Activated naive CD4-positive, alpha-beta T cell treated with anti-CD3 and anti-CD28 coated beads for 36 hours (primary cell): ENCODE measurements at regions of chr12 and their contacts with region 1.

Region 1: DNA sequence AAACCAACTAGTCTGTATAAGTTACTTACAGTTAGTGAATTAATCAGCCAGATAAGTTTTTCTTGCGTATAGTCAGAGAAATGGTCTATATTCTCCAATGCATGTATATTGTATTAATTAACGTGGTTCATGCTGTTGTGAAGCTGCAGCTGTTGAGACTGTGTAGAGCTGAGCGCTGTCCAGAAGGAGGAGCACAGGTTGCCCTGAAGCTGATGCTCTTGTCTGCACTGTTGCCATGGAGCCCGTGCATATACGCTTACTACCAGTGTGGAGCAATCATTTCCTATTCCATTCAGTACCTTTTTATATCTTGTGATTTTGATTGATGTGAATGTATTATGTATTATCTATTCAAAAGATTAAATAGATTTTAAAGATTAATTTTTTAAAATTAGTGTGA is 74.3 kb upstream of the ARID2 start:
- DNase-seq: peak; percentile 70
- H3K4me3 Mint-ChIP-seq: no peak overlapping the region
- H3K27ac Mint-ChIP-seq: no peak overlapping the region
- H3K4me1 Mint-ChIP-seq: peaks cover 2% of the 10 kb centered on the region
- H3K27me3 Mint-ChIP-seq: peaks cover 2% of the 10 kb centered on the region

Region 2: GRCh38 chr12:45745861-45746277 is 90.7 kb after region 1 on chr12:
- CTCF ChIA-PET with region 1: interaction called, 3 read pairs
- intact Hi-C with region 1: loop called (anchors 1 kb)
- DNase-seq: no peak
- H3K4me3 Mint-ChIP-seq: no peak overlapping the region
- H3K27ac Mint-ChIP-seq: no peak overlapping the region
- H3K4me1 Mint-ChIP-seq: peaks cover 57% of the 10 kb centered on the region
- H3K27me3 Mint-ChIP-seq: no peaks in the 10 kb centered on the region